ENCODE measurements at regions of chrX and their contacts with region 1.

Region 1: GRCh38 chrX:147803948-147804347 is 107.8 kb upstream of the FMR1 start:
- DNase-seq: no peak
- H3K4me3 Mint-ChIP-seq: no peak overlapping the region
- H3K27ac Mint-ChIP-seq: no peak overlapping the region
- H3K4me1 Mint-ChIP-seq: no peaks in the 10 kb centered on the region
- H3K27me3 Mint-ChIP-seq: no peaks in the 10 kb centered on the region

Region 2: GRCh38 chrX:147476008-147476407 is 327.9 kb before region 1 on chrX:
- CTCF ChIA-PET with region 1: interaction called, 9 read pairs
- POLR2A ChIA-PET with region 1: no interaction called
- intact Hi-C with region 1: loop called (anchors 1 kb)
- DNase-seq: no peak
- H3K4me3 Mint-ChIP-seq: no peak overlapping the region
- H3K27ac Mint-ChIP-seq: no peak overlapping the region
- H3K4me1 Mint-ChIP-seq: no peaks in the 10 kb centered on the region
- H3K27me3 Mint-ChIP-seq: no peaks in the 10 kb centered on the region

Region 3: DNA sequence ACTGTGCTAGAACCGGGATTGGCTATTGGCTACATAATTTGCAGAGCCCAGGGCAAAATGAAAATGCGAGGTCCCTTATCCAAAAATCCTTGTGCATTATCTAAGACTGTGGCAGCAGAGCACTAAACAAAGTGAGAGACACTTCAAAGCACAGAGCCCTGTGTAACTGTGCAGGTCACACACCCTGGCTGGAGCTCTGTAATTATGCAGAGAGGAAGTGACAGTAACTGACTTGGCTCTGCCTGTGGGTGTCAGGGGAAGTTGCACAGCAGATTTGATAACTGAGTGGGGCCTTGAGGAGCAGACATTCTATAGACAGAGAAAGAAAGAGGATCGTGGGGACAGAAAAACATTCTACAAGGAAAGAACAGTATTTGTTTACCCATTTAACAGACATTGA is 65.7 kb before region 1 on chrX:
- CTCF ChIA-PET with region 1: no interaction called
- POLR2A ChIA-PET with region 1: no interaction called
- intact Hi-C with region 1: no loop called
- DNase-seq: peak; percentile 9
- H3K4me3 Mint-ChIP-seq: no peak overlapping the region
- H3K27ac Mint-ChIP-seq: peak overlapping the region; percentile 15
- H3K4me1 Mint-ChIP-seq: peaks cover 10% of the 10 kb centered on the region
- H3K27me3 Mint-ChIP-seq: no peaks in the 10 kb centered on the region

Measured in activated CD4-positive, alpha-beta memory T cell treated with anti-CD3 and anti-CD28 coated beads for 36 hours (primary cell).